A549 (cell line): ENCODE measurements at regions of chr20 and their contacts with region 1.

Region 1: GRCh38 chr20:31723319-31724078 is 831 bp upstream of the BCL2L1 start:
- DNase-seq: peak; percentile 92 to 99
- ATAC-seq: peak; percentile 84 to 88
- H3K4me3 ChIP-seq: peak overlapping the region; percentile 68
- H3K27ac ChIP-seq: peak overlapping the region; percentile 95 to 96
- H3K4me1 ChIP-seq: peaks cover 10% of the 10 kb centered on the region
- CTCF ChIP-seq: peak; percentile 95
- EP300 ChIP-seq: 0 out of 5 replicates have a peak, but pooled peaks of 1 of the 2 experiments have one; percentile 15
- POLR2A ChIP-seq: peak; percentile 20; the same call in 1 of the 2 replicates
- RAD21 ChIP-seq: peak; percentile 97 to 98

Region 2: GRCh38 chr20:31605031-31605901 is 118.2 kb before region 1 on chr20 and contains the start of gene ID1:
- CTCF ChIA-PET with region 1: interaction called, 11 read pairs
- POLR2A ChIA-PET with region 1: interaction called, 26 read pairs
- DNase-seq: peak; percentile 91 to 98
- ATAC-seq: peak; percentile 51 to 62
- H3K4me3 ChIP-seq: peak within 1 kb of the TSS; percentile 93
- H3K27ac ChIP-seq: peak within 1 kb of the TSS; percentile 97 to 98
- H3K4me1 ChIP-seq: peaks cover 51% of the 10 kb centered on the region
- CTCF ChIP-seq: no peak
- EP300 ChIP-seq: no peak
- POLR2A ChIP-seq: peak; percentile 92
- RAD21 ChIP-seq: peak in 1 of 2 experiments; percentile 18; a peak in 2 of 5 replicates
- polyA plus RNA-seq, gene ID1: 237 and 250 TPM in 2 replicates

Region 3: GRCh38 chr20:31652917-31653396 is 70.5 kb before region 1 on chr20:
- CTCF ChIA-PET with region 1: interaction called, 489 read pairs
- POLR2A ChIA-PET with region 1: no interaction called
- DNase-seq: no peak
- ATAC-seq: peak; percentile 29 to 64; a peak in 5 of 6 replicates
- H3K4me3 ChIP-seq: no peak overlapping the region
- H3K27ac ChIP-seq: no peak overlapping the region
- H3K4me1 ChIP-seq: 0 out of 3 replicates have a peak, but pooled peaks cover 5% of the 10 kb centered on the region
- CTCF ChIP-seq: no peak
- EP300 ChIP-seq: no peak
- POLR2A ChIP-seq: no peak
- RAD21 ChIP-seq: no peak

Region 4: DNA sequence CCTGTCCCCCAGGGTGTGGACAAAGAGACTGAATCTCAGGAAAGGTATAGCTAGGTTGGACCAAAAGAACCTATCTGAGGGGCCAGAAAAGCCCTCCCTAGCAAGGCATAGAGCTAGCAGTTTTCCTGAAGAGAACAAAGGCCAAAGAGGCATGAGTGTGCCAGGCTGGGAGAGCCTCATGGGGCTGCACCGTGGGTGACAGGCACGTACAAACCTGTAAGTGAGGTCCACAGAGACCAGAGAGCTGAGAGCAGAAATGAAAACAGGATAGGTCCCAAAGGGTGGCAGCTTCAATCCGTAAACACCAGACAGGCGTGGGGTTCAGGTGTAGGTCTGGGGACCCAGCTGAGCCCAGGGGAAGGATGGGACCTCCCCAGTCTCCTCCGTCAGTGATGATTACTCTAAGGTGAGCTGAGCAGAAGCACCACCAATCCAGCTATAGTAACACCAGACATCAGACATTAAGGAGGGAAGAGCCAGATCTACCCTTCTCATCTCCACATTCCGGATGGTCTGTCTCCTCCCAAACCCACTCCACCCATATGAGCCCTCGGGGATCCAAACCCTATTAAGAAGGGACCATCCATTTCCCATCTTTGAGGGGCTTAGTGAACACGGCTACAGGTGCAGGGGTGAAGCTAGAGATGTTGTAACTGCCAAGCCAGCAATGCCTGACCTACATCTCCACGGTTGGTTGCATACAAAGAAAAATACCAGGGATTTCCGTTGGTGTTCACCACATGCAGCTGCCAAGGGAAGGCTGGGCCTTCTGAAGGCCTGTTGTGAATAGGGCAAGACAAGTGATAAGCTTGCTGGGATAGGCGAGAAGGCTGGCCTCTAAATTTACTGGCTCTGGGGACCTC is 39.1 kb before region 1 on chr20:
- CTCF ChIA-PET with region 1: interaction called, 88 read pairs
- POLR2A ChIA-PET with region 1: no interaction called
- DNase-seq: no peak
- ATAC-seq: no peak
- H3K4me3 ChIP-seq: no peak overlapping the region
- H3K27ac ChIP-seq: peak overlapping the region in 1 of 2 experiments; percentile 68; a peak in 3 of 6 replicates
- H3K4me1 ChIP-seq: peaks cover 93% of the 10 kb centered on the region
- CTCF ChIP-seq: no peak
- EP300 ChIP-seq: no peak
- POLR2A ChIP-seq: no peak
- RAD21 ChIP-seq: no peak

Region 5: DNA sequence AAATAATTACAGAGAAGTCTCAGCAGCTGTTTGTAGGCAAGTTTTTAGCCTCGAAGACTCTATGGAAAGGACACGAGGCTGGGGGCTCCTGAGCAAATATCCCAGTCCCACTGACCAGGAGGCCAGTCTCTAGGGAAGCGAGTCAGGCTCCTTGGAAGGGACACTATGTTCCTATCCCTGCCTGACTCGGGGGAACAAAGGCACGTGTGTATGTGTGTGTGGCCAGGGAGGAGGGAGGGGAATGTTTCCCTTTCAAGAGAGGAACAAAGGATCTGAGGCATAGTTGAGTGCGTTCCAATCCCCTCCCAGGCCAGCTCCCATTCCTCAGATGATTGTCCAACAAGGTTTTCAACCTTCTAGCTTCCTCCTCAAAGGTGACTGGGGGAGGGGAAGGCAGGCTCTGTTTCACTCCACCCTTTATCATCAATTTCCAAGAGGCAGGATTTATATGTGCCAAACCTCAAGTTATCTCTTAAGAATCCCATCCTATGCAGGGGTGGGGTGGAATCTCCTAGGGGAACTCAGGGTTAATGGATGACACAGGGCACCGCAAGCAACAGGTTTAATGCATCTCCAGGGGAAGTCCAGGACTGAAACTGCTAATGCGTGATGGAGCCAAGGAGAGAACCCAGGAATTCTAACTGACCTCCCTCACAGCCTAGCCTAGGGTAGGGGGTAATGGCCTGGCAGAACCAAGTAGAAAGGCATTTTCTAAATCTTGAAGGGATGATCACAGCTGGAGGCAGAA is 10.8 kb before region 1 on chr20:
- CTCF ChIA-PET with region 1: interaction called, 167 read pairs
- POLR2A ChIA-PET with region 1: interaction called, 30 read pairs
- DNase-seq: peak; percentile 80 to 95
- ATAC-seq: peak; percentile 63 to 77
- H3K4me3 ChIP-seq: peak overlapping the region; percentile 13; the same call in 1 of the 3 replicates
- H3K27ac ChIP-seq: peak overlapping the region; percentile 95 to 96
- H3K4me1 ChIP-seq: peaks cover 96% of the 10 kb centered on the region
- CTCF ChIP-seq: no peak
- EP300 ChIP-seq: peak; percentile 82 to 96; a peak in 4 of 5 replicates
- POLR2A ChIP-seq: no peak
- RAD21 ChIP-seq: peak; percentile 1 to 29; a peak in 1 of 5 replicates

Region 6: GRCh38 chr20:32155017-32155981 is 431.8 kb after region 1 on chr20:
- CTCF ChIA-PET with region 1: no interaction called
- POLR2A ChIA-PET with region 1: no interaction called
- DNase-seq: peak; percentile 10 to 41
- ATAC-seq: peak; percentile 69 to 76; a peak in 5 of 6 replicates
- H3K4me3 ChIP-seq: no peak overlapping the region
- H3K27ac ChIP-seq: no peak overlapping the region
- H3K4me1 ChIP-seq: peaks cover 8% of the 10 kb centered on the region; the same call in 2 of the 3 replicates
- CTCF ChIP-seq: no peak
- EP300 ChIP-seq: no peak
- POLR2A ChIP-seq: no peak
- RAD21 ChIP-seq: peak; percentile 15 to 53; a peak in 3 of 5 replicates